Dendritic cell treated with granulocyte-macrophage colony-stimulating factor and Interleukin-4, amounts not matched to agents 40 ng/mL and 50 ng/mL, for 4 days (primary cell): ENCODE measurements at regions of chr11 and their contacts with region 1.

Region 1: GRCh38 chr11:35617687-35618496 is at the start of gene FJX1:
- H3K4me3 Mint-ChIP-seq: peak within 1 kb of the TSS; percentile 74
- H3K27ac Mint-ChIP-seq: peak within 1 kb of the TSS; percentile 60
- H3K4me1 Mint-ChIP-seq: peaks cover 18% of the 10 kb centered on the region
- H3K27me3 Mint-ChIP-seq: peaks cover 66% of the 10 kb centered on the region

Region 2: DNA sequence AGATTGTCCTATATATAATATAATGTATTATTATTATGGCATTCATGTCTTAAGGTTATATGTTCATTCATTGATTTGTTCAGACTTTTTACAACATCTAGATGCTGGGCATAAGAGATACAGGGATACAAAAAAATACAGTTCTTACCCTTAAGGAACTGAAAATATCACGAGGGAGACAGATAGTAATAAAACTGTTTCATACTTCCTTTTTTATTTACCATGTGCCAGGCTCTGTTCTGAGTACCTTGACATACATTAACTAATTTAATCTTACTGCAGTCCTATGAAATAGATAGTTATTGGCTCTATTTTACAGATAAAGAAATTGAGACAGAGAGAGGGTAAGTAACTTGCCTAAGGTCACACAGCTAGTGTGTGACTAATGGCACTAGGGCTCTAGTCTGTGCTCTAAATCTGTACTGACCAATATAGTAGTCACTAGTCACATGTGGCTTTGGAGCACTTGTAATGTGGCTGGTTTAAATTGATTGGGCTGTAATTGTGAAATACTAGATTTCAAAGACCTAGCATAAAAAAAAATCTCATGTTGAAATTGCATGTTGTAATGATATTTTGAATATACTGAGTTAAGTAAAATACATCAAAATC is 65.9 kb after region 1 on chr11:
- intact Hi-C with region 1: no loop called
- H3K4me3 Mint-ChIP-seq: no peak overlapping the region
- H3K27ac Mint-ChIP-seq: no peak overlapping the region
- H3K4me1 Mint-ChIP-seq: peaks cover 24% of the 10 kb centered on the region
- H3K27me3 Mint-ChIP-seq: no peaks in the 10 kb centered on the region

Region 3: GRCh38 chr11:35822815-35823495 is 205.1 kb after region 1 on chr11:
- intact Hi-C with region 1: loop called (anchors 1 kb)
- H3K4me3 Mint-ChIP-seq: no peak overlapping the region
- H3K27ac Mint-ChIP-seq: no peak overlapping the region
- H3K4me1 Mint-ChIP-seq: peaks cover 10% of the 10 kb centered on the region
- H3K27me3 Mint-ChIP-seq: peaks cover 2% of the 10 kb centered on the region

Region 4: GRCh38 chr11:36131721-36132397 is 514.0 kb after region 1 on chr11:
- intact Hi-C with region 1: loop called (anchors 1 kb)
- H3K4me3 Mint-ChIP-seq: no peak overlapping the region
- H3K27ac Mint-ChIP-seq: no peak overlapping the region
- H3K4me1 Mint-ChIP-seq: peaks cover 10% of the 10 kb centered on the region
- H3K27me3 Mint-ChIP-seq: no peaks in the 10 kb centered on the region

Region 5: GRCh38 chr11:36258730-36259360 is 641.0 kb after region 1 on chr11:
- intact Hi-C with region 1: loop called (anchors 2 kb)
- H3K4me3 Mint-ChIP-seq: no peak overlapping the region
- H3K27ac Mint-ChIP-seq: no peak overlapping the region
- H3K4me1 Mint-ChIP-seq: no peaks in the 10 kb centered on the region
- H3K27me3 Mint-ChIP-seq: peaks cover 40% of the 10 kb centered on the region